H1 (cell line): ENCODE measurements at regions of chr14 and their contacts with region 1.

Region 1: GRCh38 chr14:73713803-73714655 is at the start of gene PNMA1:
- DNase-seq: peak; percentile 31 to 88
- H3K4me3 ChIP-seq: peak within 1 kb of the TSS; percentile 88 to 98 (median 94)
- H3K27ac ChIP-seq: peak within 1 kb of the TSS; percentile 72
- H3K4me1 ChIP-seq: peaks cover 0 to 23% (median 14%) of the 10 kb centered on the region in 4 experiments; a peak in 6 of 7 replicates
- H3K27me3 ChIP-seq: peaks cover 0 to 6% (median 2%) of the 10 kb centered on the region in 4 experiments; a peak in 3 of 7 replicates
- CTCF ChIP-seq: no peak
- EP300 ChIP-seq: no peak
- POLR2A ChIP-seq: peak; percentile 86 to 92
- RAD21 ChIP-seq: no peak
- total RNA-seq, gene PNMA1: 52.7 and 55.1 TPM in 2 replicates

Region 2: GRCh38 chr14:73700325-73700724 is 13.7 kb before region 1 on chr14:
- CTCF ChIA-PET with region 1: no interaction called
- POLR2A ChIA-PET with region 1: interaction called, 10 read pairs
- DNase-seq: no peak
- H3K4me3 ChIP-seq: no peak overlapping the region
- H3K27ac ChIP-seq: no peak overlapping the region
- H3K4me1 ChIP-seq: no peaks in the 10 kb centered on the region
- H3K27me3 ChIP-seq: no peaks in the 10 kb centered on the region
- CTCF ChIP-seq: no peak
- EP300 ChIP-seq: no peak
- POLR2A ChIP-seq: no peak
- RAD21 ChIP-seq: no peak

Region 3: DNA sequence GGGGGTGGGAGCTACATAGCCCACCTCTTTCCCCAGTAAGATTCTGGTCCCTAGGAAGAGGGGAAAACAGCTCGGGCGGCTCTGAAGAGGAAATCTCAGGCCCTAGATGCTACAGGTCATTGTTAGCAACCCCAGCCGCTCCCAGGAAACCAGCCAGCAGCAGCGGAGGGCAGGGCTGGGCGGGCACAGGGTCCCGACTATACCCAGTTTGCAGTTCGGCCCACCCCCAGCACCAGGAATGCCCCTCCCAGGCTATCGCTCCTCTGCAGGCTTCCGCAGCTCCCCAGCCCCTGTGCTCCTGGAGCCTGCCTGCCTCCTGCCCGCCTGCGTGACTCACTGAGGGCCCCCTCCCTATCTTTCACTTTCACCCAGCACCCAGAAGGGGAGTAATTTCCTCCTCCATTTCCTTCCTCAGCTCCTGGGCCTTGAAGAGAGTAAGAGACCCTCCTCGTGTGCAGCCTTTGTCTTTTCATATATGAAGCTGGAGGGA is 27.4 kb after region 1 on chr14:
- CTCF ChIA-PET with region 1: interaction called, 4 read pairs
- POLR2A ChIA-PET with region 1: interaction called, 11 read pairs
- DNase-seq: peak; percentile 47 to 74
- H3K4me3 ChIP-seq: peak overlapping the region in 3 of 4 experiments; percentile 1 to 43 (median 19); a peak in 4 of 8 replicates
- H3K27ac ChIP-seq: peak overlapping the region; percentile 31; the same call in 1 of the 2 replicates
- H3K4me1 ChIP-seq: peaks cover 6 to 41% (median 30%) of the 10 kb centered on the region in 4 experiments
- H3K27me3 ChIP-seq: no peaks in the 10 kb centered on the region
- CTCF ChIP-seq: no peak
- EP300 ChIP-seq: no peak
- POLR2A ChIP-seq: no peak
- RAD21 ChIP-seq: no peak